Caco-2 (cell line): ENCODE measurements at regions of chr1 and their contacts with region 1.

Region 1: GRCh38 chr1:25503551-25504426 is 39.6 kb upstream of the LDLRAP1 start:
- DNase-seq: peak; percentile 64 to 70
- H3K4me3 ChIP-seq: no peak overlapping the region
- H3K4me3 Mint-ChIP-seq: no peak overlapping the region
- H3K27ac Mint-ChIP-seq: no peak overlapping the region
- H3K4me1 ChIP-seq: peaks cover 20% of the 10 kb centered on the region
- H3K4me1 Mint-ChIP-seq: peaks cover 16% of the 10 kb centered on the region
- H3K27me3 ChIP-seq: no peaks in the 10 kb centered on the region
- H3K27me3 Mint-ChIP-seq: no peaks in the 10 kb centered on the region
- CTCF ChIP-seq: peak; percentile 61 to 68

Region 2: DNA sequence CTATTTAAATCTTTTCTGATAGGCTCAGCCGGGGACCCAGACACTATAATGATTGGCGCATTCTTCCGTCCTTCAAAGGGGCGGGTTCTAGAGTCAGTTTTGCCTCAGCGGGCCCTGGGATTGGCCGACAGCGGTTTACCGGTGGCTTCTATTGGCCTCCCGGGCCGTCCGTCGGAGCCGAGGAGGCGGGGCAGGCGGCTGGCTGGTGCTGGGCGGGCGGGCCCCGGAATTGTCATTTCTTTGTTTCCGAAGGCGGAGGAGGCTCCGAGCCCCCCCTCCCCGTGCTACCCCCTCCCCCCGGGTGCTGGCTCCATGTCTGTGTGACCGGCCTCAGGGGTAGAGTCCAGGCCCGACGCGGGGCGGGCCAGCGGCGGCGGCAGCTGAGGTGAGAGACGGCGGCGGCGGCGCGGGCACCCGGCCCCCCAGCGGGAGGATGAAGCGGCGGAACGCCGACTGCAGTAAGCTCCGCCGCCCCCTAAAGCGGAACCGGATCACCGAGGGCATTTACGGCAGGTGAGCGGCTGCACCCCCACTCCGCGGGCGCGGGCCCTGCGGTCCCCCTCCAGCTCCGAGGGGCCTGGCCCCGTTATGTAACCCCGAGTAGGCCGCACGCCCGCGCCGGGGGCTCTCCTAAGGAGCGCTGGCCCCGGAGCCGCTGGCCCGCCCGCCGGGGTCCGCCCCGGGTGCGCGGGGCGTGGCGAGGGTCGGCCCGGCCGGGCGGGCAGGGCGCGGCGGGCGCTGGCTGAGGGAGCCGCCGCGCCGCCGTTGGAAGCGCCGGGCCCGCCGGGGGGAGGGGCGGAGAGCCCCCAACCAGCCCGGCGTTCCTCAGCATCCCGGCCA is 72.9 kb before region 1 on chr1 and contains the start of gene MACO1:
- CTCF ChIA-PET with region 1: no interaction called
- POLR2A ChIA-PET with region 1: no interaction called
- intact Hi-C with region 1: loop called (anchors 10 kb)
- DNase-seq: peak; percentile 92 to 96
- H3K4me3 ChIP-seq: peak within 1 kb of the TSS; percentile 58
- H3K4me3 Mint-ChIP-seq: peak within 1 kb of the TSS; percentile 88
- H3K27ac Mint-ChIP-seq: peak within 1 kb of the TSS; percentile 88
- H3K4me1 ChIP-seq: no peaks in the 10 kb centered on the region
- H3K4me1 Mint-ChIP-seq: no peaks in the 10 kb centered on the region
- H3K27me3 ChIP-seq: no peaks in the 10 kb centered on the region
- H3K27me3 Mint-ChIP-seq: no peaks in the 10 kb centered on the region
- CTCF ChIP-seq: no peak
- total RNA-seq, gene MACO1: 16.8 TPM in 2 replicates

Region 3: DNA sequence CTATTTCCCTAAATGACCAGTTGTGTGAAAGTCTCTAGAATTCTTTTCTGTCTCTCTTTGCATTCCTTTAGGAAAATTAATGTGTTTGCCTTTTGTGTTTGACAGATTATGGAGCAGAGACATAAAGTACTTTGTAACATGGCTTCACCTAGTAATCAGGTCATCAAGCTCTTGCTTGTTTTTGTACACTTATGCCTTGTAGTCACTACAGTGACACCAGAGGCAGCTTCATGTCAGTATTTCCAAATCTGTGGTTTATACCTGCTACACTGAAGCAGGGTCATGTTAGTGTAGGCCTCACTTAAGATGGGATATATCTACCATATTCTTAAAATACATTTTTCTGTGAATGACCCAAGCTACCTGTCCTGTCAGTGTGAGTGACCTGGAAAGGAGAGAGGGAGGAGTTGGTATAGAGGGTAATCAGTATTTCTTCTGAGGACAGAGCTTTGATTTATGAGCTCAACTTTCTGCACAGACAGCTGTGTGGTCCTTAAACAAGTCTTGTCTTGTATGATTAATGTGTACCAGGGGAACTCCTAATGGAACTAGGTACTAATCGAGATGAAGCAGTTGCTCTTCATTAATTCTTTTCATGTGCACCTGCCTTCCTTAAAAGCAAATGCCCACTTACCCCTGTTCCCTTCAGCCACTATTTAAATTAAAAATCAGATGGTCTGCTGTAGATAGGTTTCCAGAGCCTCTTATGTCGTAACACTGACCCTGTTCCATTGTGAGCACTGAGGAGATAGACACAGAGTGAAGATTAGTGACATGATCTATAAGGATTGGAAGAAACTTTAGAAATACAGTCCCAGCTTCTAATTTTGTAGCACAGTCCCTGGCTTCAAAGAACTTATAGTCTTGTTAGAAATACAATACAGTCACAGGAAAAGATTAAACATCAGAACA is 27.3 kb before region 1 on chr1:
- CTCF ChIA-PET with region 1: no interaction called
- POLR2A ChIA-PET with region 1: no interaction called
- intact Hi-C with region 1: loop called (anchors 1 kb)
- DNase-seq: no peak
- H3K4me3 ChIP-seq: no peak overlapping the region
- H3K4me3 Mint-ChIP-seq: no peak overlapping the region
- H3K27ac Mint-ChIP-seq: no peak overlapping the region
- H3K4me1 ChIP-seq: peaks cover 30% of the 10 kb centered on the region
- H3K4me1 Mint-ChIP-seq: peaks cover 13% of the 10 kb centered on the region
- H3K27me3 ChIP-seq: no peaks in the 10 kb centered on the region
- H3K27me3 Mint-ChIP-seq: no peaks in the 10 kb centered on the region
- CTCF ChIP-seq: no peak

Region 4: GRCh38 chr1:25520446-25521061 is 16.8 kb after region 1 on chr1:
- CTCF ChIA-PET with region 1: interaction called, 12 read pairs
- POLR2A ChIA-PET with region 1: no interaction called
- intact Hi-C with region 1: loop called (anchors 1 kb)
- DNase-seq: peak in 1 of 2 experiments; percentile 57
- H3K4me3 ChIP-seq: no peak overlapping the region
- H3K4me3 Mint-ChIP-seq: no peak overlapping the region
- H3K27ac Mint-ChIP-seq: no peak overlapping the region
- H3K4me1 ChIP-seq: no peaks in the 10 kb centered on the region
- H3K4me1 Mint-ChIP-seq: no peaks in the 10 kb centered on the region
- H3K27me3 ChIP-seq: no peaks in the 10 kb centered on the region
- H3K27me3 Mint-ChIP-seq: no peaks in the 10 kb centered on the region
- CTCF ChIP-seq: peak; percentile 65 to 72